PC-9 (cell line): ENCODE measurements at regions of chr1 and their contacts with region 1.

Region 1: DNA sequence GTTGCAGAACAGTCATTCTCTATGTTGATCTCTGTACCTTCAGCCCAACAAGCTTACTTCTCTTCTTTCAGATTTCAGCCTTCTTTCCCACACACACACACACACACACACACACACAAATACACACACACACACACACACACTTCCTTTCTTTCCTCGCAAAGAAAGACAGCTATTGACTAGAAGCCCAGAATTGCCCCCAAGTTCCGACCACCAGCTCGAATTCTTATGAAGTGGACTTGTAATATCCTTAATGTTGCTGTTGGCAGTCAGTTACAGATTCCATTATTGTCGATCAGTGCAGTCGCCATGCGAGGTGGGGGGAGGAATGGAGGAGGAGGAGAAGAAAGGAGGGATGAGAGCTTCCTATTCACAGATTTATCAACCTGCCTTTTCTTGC is 125.5 kb downstream of the CLEC20A start:
- DNase-seq: no peak
- H3K4me3 ChIP-seq: no peak overlapping the region
- H3K27ac ChIP-seq: no peak overlapping the region
- H3K4me1 ChIP-seq: peaks cover 9% of the 10 kb centered on the region
- H3K27me3 ChIP-seq: no peaks in the 10 kb centered on the region
- CTCF ChIP-seq: no peak

Region 2: GRCh38 chr1:178337091-178337706 is 34.0 kb before region 1 on chr1:
- CTCF ChIA-PET with region 1: no interaction called
- POLR2A ChIA-PET with region 1: interaction called, 11 read pairs
- intact Hi-C with region 1: loop called (anchors 2 kb)
- DNase-seq: no peak
- H3K4me3 ChIP-seq: no peak overlapping the region
- H3K27ac ChIP-seq: no peak overlapping the region
- H3K4me1 ChIP-seq: peaks cover 23% of the 10 kb centered on the region
- H3K27me3 ChIP-seq: no peaks in the 10 kb centered on the region
- CTCF ChIP-seq: no peak

Region 3: GRCh38 chr1:178344513-178345082 is 26.6 kb before region 1 on chr1:
- CTCF ChIA-PET with region 1: no interaction called
- POLR2A ChIA-PET with region 1: interaction called, 4 read pairs
- intact Hi-C with region 1: loop called (anchors 2 kb)
- DNase-seq: peak; percentile 23 to 70
- H3K4me3 ChIP-seq: no peak overlapping the region
- H3K27ac ChIP-seq: peak overlapping the region; percentile 56
- H3K4me1 ChIP-seq: peaks cover 43% of the 10 kb centered on the region
- H3K27me3 ChIP-seq: no peaks in the 10 kb centered on the region
- CTCF ChIP-seq: peak; percentile 52; the same call in 1 of the 2 replicates

Region 4: GRCh38 chr1:180094705-180095295 is 1723.6 kb after region 1 on chr1:
- CTCF ChIA-PET with region 1: no interaction called
- POLR2A ChIA-PET with region 1: interaction called, 11 read pairs
- intact Hi-C with region 1: no loop called
- DNase-seq: no peak
- H3K4me3 ChIP-seq: no peak overlapping the region
- H3K27ac ChIP-seq: no peak overlapping the region
- H3K4me1 ChIP-seq: peaks cover 25% of the 10 kb centered on the region
- H3K27me3 ChIP-seq: no peaks in the 10 kb centered on the region
- CTCF ChIP-seq: no peak